ENCODE measurements at regions of chr17 and their contacts with region 1.

Region 1: DNA sequence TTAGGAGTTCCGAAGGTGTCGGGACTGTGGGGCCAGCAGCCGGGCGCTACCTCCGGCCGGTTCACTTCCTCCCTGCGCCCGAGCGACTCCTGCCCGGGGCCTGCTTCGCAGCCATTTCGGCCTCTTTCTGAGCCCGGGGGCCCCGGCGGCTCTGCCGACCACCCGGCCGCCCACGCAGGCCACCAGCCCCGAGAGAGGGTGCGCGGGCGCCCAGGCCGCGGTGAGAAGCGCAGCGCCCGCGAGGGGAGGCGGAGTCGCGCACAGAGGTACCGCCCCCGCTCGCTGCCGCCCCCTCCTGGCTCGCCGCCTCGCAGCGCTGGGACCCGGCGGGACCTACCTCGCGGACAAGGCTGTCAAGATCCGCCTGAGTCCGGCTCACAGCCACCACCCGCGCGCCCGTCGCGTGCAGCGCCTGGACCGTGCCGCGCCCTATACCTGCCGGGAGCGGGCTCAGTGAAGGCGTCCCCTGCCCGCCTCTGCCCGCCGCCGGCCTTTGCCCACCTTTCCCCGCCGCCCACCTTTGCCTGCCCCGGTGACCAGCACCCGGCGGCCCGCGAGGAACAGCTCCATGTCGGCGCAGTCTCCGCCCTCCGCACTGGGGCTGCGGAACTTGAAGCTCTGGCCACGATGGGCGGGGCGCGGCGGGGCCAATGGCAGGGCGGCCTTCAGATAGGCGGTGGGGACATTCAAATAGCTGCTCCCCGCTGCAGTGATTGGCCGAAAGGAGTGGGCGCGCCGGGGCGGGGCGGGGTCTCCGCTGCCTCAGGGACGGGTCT is at the start of gene DCXR:
- H3K4me3 ChIP-seq: peak within 1 kb of the TSS; percentile 64
- H3K27ac ChIP-seq: peak within 1 kb of the TSS; percentile 83
- H3K4me1 ChIP-seq: peaks cover 10% of the 10 kb centered on the region
- CTCF ChIP-seq: peak; percentile 94

Region 2: GRCh38 chr17:81952792-81953228 is 84.5 kb before region 1 on chr17:
- CTCF ChIA-PET with region 1: interaction called, 6 read pairs
- POLR2A ChIA-PET with region 1: interaction called, 10 read pairs
- H3K4me3 ChIP-seq: no peak overlapping the region
- H3K27ac ChIP-seq: no peak overlapping the region
- H3K4me1 ChIP-seq: no peaks in the 10 kb centered on the region
- CTCF ChIP-seq: no peak

Region 3: DNA sequence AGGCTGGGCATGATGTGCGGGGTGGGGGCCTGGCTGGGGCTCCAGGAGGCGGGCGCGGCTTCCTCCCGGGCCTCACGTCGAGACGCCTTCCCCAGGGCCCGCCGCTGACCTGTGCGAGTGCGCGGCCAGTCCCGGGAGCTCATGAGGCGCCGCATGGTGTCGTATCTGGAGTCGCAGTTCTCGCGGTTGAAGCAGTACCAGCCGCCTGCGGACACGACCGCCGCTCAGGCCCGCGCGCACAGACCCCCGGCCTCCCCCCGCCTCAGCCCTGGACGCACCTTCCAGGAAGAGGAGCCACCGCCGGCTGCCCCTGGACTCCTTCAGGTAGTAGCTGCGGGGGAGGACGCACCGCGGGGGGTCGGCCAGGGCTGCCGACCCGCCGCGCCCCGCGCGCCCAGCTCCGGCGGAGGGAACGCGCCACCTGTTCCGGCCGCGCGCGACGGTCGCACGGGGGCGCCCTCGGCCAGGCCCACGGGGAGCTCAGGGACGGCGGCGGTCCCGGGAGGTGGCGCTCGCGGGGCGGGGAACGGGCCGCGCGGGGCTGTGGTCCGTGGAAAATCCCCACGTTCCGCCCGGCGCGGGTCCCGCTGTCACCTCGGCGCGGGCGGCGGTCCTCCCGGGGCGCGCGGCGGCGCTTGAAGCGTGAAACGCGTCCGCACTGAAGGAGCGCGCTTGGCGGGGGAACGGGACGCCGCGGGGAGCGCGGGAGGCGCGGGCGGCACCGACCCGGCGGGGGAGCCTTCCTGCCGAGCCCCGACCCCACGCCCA is 77.8 kb before region 1 on chr17:
- CTCF ChIA-PET with region 1: interaction called, 6 read pairs
- POLR2A ChIA-PET with region 1: interaction called, 11 read pairs
- H3K4me3 ChIP-seq: peak overlapping the region; percentile 20
- H3K27ac ChIP-seq: peak overlapping the region; percentile 31; the same call in 1 of the 2 replicates
- H3K4me1 ChIP-seq: peaks cover 4% of the 10 kb centered on the region; the same call in 1 of the 2 replicates
- CTCF ChIP-seq: no peak

Region 4: GRCh38 chr17:82051776-82052637 is 14.7 kb after region 1 on chr17 and contains the starts of genes GPS1 and RFNG:
- CTCF ChIA-PET with region 1: interaction called, 5 read pairs
- POLR2A ChIA-PET with region 1: interaction called, 96 read pairs
- H3K4me3 ChIP-seq: peak within 1 kb of the TSS; percentile 83
- H3K27ac ChIP-seq: peak within 1 kb of the TSS; percentile 73
- H3K4me1 ChIP-seq: peaks cover 7% of the 10 kb centered on the region
- CTCF ChIP-seq: no peak

Region 5: GRCh38 chr17:82098072-82098821 is 60.9 kb after region 1 on chr17 and contains the start of gene FASN:
- CTCF ChIA-PET with region 1: interaction called, 4 read pairs
- POLR2A ChIA-PET with region 1: interaction called, 18 read pairs
- H3K4me3 ChIP-seq: peak within 1 kb of the TSS; percentile 84
- H3K27ac ChIP-seq: peak within 1 kb of the TSS; percentile 99
- H3K4me1 ChIP-seq: 0 out of 2 replicates have a peak, but pooled peaks cover 7% of the 10 kb centered on the region
- CTCF ChIP-seq: peak; percentile 69; the same call in 1 of the 2 replicates

Measured in HEK293 (cell line).